Breast epithelium (tissue), 4 donors: ENCODE measurements at regions of chr6 and their contacts with region 1.

Region 1: GRCh38 chr6:129110690-129111343 is 227.9 kb downstream of the LAMA2 start:
- DNase-seq: no peak
- H3K4me3 ChIP-seq: no peak overlapping the region
- H3K27ac ChIP-seq: peak overlapping the region; percentile 23 to 77
- H3K4me1 ChIP-seq: no peaks in the 10 kb centered on the region
- H3K27me3 ChIP-seq: no peaks in the 10 kb centered on the region
- CTCF ChIP-seq: no peak
- POLR2A ChIP-seq: no peak

Region 2: GRCh38 chr6:127582777-127583462 is 1527.9 kb before region 1 on chr6:
- intact Hi-C with region 1: no loop called
- DNase-seq: no peak
- H3K4me3 ChIP-seq: no peak overlapping the region
- H3K27ac ChIP-seq: no peak overlapping the region
- H3K4me1 ChIP-seq: no peaks in the 10 kb centered on the region
- H3K27me3 ChIP-seq: no peaks in the 10 kb centered on the region
- CTCF ChIP-seq: no peak
- POLR2A ChIP-seq: no peak

Region 3: DNA sequence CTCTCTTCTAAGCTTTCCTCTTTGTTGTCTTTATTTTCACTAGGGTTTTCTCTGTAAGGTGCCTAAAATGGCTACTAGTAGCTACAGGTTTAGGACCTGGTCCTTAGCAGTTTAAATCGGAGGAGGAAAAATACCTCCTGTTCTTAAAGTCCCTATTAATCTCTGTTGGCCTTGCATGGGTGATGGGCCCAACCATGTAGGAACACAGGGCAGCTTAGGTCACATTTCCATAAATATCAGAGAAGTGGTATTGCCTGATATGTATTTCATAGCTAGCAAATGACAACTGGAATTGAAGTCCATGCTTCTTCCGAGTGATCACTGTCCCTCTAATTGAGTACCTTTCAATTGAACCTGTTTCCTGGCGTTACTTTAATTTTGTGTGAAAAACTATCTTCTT is 157.9 kb before region 1 on chr6:
- intact Hi-C with region 1: loop called (anchors 5 kb)
- DNase-seq: no peak
- H3K4me3 ChIP-seq: no peak overlapping the region
- H3K27ac ChIP-seq: no peak overlapping the region
- H3K4me1 ChIP-seq: no peaks in the 10 kb centered on the region
- H3K27me3 ChIP-seq: no peaks in the 10 kb centered on the region
- CTCF ChIP-seq: no peak
- POLR2A ChIP-seq: no peak

Region 4: GRCh38 chr6:129730477-129731165 is 619.8 kb after region 1 on chr6:
- intact Hi-C with region 1: no loop called
- DNase-seq: no peak
- H3K4me3 ChIP-seq: no peak overlapping the region
- H3K27ac ChIP-seq: no peak overlapping the region
- H3K4me1 ChIP-seq: no peaks in the 10 kb centered on the region
- H3K27me3 ChIP-seq: no peaks in the 10 kb centered on the region
- CTCF ChIP-seq: peak; percentile 49 to 54 (median 51)
- POLR2A ChIP-seq: no peak